Activated naive CD4-positive, alpha-beta T cell treated with anti-CD3 and anti-CD28 coated beads for 36 hours (primary cell): ENCODE measurements at regions of chr15 and their contacts with region 1.

Region 1: DNA sequence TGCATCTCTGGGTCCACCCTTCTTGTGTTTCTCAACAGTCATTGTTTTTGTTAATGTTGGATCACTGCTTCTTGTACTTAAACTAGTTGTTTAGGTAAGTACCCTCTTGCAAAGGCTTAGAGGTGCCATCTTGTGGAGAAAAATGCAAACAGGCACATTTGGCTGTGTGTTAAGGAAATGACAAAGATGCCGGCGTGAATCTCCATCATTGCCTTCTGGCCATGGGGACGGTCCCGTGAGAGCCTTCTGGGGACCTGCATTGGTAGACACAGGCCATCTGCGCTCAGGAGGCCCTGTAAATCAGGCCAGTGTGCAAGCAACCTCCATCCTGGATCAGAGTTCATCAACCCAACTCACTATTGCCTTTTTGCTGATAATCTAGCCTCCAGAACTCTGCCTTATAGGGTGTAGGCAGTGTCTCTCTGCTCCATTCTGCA is 158.6 kb upstream of the NR2E3 start:
- DNase-seq: no peak
- H3K4me3 Mint-ChIP-seq: no peak overlapping the region
- H3K27ac Mint-ChIP-seq: no peak overlapping the region
- H3K4me1 Mint-ChIP-seq: no peaks in the 10 kb centered on the region
- H3K27me3 Mint-ChIP-seq: peaks cover 6% of the 10 kb centered on the region

Region 2: GRCh38 chr15:71448688-71449114 is 203.1 kb before region 1 on chr15:
- CTCF ChIA-PET with region 1: no interaction called
- intact Hi-C with region 1: loop called (anchors 5 kb)
- DNase-seq: peak; percentile 8
- H3K4me3 Mint-ChIP-seq: no peak overlapping the region
- H3K27ac Mint-ChIP-seq: no peak overlapping the region
- H3K4me1 Mint-ChIP-seq: no peaks in the 10 kb centered on the region
- H3K27me3 Mint-ChIP-seq: peaks cover 12% of the 10 kb centered on the region